Activated naive CD4-positive, alpha-beta T cell treated with anti-CD3 and anti-CD28 coated beads for 36 hours (primary cell): ENCODE measurements at regions of chr3 and their contacts with region 1.

Region 1: DNA sequence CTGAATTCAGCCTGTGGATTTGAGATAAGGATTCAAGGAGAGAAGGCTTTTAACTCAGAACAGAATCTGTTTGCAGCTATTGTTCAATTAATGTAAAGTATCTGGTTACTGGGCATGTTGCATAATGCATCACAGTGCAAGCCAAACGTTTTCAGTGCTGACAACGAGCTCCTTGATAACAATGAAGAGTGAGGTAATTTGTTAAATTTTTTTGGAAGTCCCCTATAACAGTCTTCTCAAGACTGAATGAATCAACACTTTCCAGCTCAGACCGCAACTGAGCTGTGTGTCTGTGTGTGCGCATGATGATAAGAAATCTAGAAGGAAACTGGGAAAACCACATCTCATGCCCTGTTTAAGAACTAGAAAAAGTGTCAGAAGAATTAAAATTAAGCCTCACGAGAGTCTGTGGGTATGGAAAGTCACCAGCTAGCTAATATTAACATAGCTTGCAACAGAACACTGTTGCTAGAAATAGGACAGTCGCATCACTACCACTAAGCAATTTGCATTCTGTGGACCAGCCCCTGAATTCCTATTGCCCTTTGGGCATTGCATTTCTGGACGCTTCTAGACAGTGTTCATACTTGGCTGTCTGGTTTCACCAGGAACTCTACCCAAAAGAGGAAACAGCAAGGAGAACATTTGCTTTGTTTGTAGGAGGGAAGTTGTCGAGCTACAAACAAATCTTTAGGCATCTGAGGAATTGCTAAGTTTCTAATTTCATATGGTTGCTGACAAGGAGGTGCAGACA is 43.7 kb upstream of the ATP2C1 start:
- DNase-seq: peak; percentile 83
- H3K4me3 Mint-ChIP-seq: peak overlapping the region; percentile 45
- H3K27ac Mint-ChIP-seq: peak overlapping the region; percentile 59
- H3K4me1 Mint-ChIP-seq: peaks cover 27% of the 10 kb centered on the region
- H3K27me3 Mint-ChIP-seq: peaks cover 44% of the 10 kb centered on the region

Region 2: GRCh38 chr3:129893581-129894070 is 956.6 kb before region 1 on chr3 and contains the start of gene TMCC1:
- CTCF ChIA-PET with region 1: no interaction called
- intact Hi-C with region 1: loop called (anchors 5 kb)
- DNase-seq: peak; percentile 87
- H3K4me3 Mint-ChIP-seq: peak within 1 kb of the TSS; percentile 92
- H3K27ac Mint-ChIP-seq: peak within 1 kb of the TSS; percentile 70
- H3K4me1 Mint-ChIP-seq: peaks cover 38% of the 10 kb centered on the region
- H3K27me3 Mint-ChIP-seq: no peaks in the 10 kb centered on the region
- total RNA-seq, gene TMCC1: 13.6 to 14.3 TPM

Region 3: DNA sequence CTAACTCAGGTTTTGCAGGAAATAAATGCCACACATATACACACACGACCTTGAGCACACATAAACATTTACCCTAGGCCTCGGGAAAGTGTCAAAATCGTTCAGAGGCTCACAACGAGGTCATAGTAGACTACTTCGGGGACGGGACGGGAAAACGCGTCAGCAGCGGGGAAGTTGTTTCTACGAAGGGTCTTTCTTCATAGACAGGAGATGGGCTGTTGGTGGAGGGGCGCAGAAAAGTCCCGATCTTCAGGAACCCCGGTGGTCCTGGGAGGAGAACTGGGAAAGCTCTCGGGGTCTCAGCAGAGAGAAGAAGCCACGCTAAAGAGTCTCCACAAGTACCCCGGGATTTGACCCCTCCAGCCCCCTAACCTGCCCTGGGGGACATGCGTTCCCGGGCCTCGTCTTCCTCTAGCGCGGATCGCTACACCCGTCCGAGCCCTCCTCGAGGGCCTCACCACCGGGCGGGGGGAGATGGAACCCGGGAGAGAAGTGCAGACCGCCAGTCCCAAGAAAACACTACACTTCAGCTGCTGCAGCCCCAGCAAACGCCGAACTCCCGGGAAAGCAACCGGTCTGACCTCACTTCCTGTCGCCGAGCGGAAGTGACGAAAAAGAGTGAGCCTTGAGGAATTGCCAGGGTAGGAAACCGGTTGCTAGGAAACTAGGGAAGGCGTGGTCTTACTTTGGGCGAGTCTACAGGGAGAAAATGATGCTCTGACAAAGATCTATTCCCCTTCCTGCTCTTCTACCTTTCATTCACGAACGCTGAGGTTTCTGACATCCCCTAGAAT is 103.8 kb before region 1 on chr3 and contains the start of gene PIK3R4:
- CTCF ChIA-PET with region 1: no interaction called
- intact Hi-C with region 1: loop called (anchors 1 kb)
- DNase-seq: peak; percentile 98
- H3K4me3 Mint-ChIP-seq: peak within 1 kb of the TSS; percentile 81
- H3K27ac Mint-ChIP-seq: peak within 1 kb of the TSS; percentile 84
- H3K4me1 Mint-ChIP-seq: peaks cover 40% of the 10 kb centered on the region
- H3K27me3 Mint-ChIP-seq: no peaks in the 10 kb centered on the region
- total RNA-seq, gene PIK3R4: 25.8 to 28.6 TPM

Region 4: DNA sequence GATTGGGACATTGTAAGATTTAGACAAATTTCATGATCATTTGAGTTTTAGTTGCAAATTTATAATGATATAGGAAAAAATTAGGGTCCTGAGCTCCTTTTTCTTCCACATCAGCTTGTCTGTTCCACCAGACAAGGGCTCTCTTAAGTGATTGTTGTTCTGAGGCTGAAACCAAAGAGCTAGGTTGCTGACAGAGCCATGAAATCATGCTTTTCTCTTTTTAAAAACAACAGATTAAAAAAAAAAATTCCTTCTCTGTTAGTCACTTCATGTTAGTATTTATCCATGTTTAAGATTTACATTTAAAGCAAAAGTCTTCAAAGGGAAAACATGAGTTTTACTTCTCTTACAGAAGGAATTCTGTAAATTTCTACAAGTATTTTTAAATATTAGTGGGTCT is 100.4 kb after region 1 on chr3:
- CTCF ChIA-PET with region 1: no interaction called
- intact Hi-C with region 1: no loop called
- DNase-seq: no peak
- H3K4me3 Mint-ChIP-seq: no peak overlapping the region
- H3K27ac Mint-ChIP-seq: no peak overlapping the region
- H3K4me1 Mint-ChIP-seq: peaks cover 11% of the 10 kb centered on the region
- H3K27me3 Mint-ChIP-seq: no peaks in the 10 kb centered on the region

Region 5: DNA sequence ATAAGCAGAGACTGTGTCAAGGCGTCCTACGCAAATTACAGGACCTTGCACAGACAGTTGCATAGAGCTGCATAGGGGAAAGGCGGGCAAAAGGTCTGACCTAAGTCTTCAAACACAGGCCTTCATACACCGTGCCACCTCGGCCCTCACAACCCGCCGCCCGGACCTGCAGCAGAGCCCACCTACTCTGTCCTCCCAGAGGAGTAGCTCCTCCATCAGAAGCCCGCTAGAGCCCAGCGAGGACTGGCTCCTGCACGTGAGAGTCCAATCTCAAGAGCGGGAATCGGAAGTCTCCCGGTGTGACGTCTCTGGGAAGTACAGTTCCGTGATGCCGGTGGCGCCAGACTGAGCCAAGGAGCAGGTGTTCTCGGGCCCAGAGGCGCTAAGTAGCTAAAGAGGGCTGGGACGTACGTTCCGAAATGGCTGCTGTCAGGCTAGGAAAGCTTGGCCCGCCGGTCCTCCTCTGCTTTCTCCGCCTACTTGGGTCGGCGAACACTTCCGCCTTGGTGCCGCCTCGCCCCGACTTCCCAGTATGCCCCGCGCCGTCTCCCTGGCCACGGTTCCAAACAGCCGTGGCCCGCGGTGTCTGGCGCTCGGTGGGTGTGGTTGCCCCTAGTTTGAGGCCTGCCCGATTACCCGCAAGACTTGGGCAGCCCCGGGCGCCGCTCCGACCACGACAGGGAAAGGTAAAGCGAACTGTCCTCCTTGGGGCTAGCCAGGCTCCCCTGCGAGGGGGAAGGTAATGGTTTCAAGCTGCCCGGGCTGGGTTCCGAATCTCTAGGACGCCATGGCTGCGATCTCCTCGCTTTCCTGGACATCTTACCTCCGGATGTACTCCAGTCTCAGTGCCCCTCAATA is 176.3 kb after region 1 on chr3 and contains the starts of genes ASTE1 and NEK11:
- CTCF ChIA-PET with region 1: no interaction called
- intact Hi-C with region 1: loop called (anchors 5 kb)
- DNase-seq: peak; percentile 92
- H3K4me3 Mint-ChIP-seq: peak within 1 kb of the TSS; percentile 92
- H3K27ac Mint-ChIP-seq: peak within 1 kb of the TSS; percentile 94
- H3K4me1 Mint-ChIP-seq: peaks cover 42% of the 10 kb centered on the region
- H3K27me3 Mint-ChIP-seq: no peaks in the 10 kb centered on the region
- total RNA-seq, gene ASTE1: 10.8 to 11.2 TPM
- total RNA-seq, gene NEK11: 1.1 to 1.9 TPM

Region 6: GRCh38 chr3:131735116-131735515 is 884.9 kb after region 1 on chr3:
- CTCF ChIA-PET with region 1: no interaction called
- intact Hi-C with region 1: loop called (anchors 5 kb)
- DNase-seq: no peak
- H3K4me3 Mint-ChIP-seq: no peak overlapping the region
- H3K27ac Mint-ChIP-seq: no peak overlapping the region
- H3K4me1 Mint-ChIP-seq: peaks cover 17% of the 10 kb centered on the region
- H3K27me3 Mint-ChIP-seq: peaks cover 12% of the 10 kb centered on the region